Activated CD4-positive, alpha-beta T cell treated with anti-CD3 and anti-CD28 coated beads, Interleukin-2, amount 10 ng/mL, durations not matched to agents 24 days and 14 days (primary cell): ENCODE measurements at regions of chr1 and their contacts with region 1.

Region 1: DNA sequence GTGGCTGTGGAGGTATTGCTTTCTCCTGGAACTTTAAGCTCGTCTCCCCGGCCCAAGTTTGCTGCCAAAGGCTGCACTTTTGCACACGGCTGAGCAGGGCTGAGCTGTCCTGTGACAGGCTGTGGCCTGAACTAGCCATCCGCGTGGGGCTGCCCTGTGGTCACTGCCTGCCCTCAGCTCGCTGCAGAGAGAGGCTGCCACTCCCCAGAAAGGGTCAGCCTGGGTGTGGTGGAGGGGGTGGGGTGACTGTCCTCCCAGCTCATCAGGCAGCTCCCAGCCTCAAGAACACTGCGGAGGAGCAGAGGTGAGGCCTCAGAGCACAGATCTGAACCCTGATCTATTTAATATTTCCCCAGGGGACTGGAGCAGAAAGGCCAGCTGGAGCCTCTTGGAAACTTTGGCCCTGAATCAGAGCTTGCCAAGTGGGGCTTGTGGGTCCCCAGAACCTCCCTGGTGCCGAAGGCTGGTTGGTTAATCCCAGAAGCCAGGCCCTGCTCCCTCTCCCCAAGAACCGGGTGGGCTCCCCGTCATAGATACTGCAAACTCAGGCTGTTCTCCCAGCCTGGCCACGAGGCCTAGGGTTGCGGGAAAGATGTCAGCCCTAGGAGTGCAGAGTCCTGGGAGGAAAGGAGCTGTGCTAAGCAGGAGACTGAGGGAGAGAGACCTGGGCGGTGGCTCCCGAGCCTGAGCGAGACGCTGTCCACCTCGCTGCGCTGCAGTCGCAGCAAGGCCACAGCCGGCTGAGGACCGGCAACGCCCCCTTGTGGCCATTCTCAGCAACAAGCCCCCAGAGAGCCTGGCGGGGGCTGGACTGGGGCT is 125.1 kb upstream of the IPO9 start:
- DNase-seq: peak; percentile 89
- H3K4me3 Mint-ChIP-seq: no peak overlapping the region
- H3K27ac Mint-ChIP-seq: no peak overlapping the region
- H3K4me1 Mint-ChIP-seq: no peaks in the 10 kb centered on the region
- H3K27me3 Mint-ChIP-seq: peaks cover 5% of the 10 kb centered on the region

Region 2: GRCh38 chr1:201530741-201531531 is 172.9 kb before region 1 on chr1:
- intact Hi-C with region 1: loop called (anchors 1 kb)
- DNase-seq: peak; percentile 76
- H3K4me3 Mint-ChIP-seq: no peak overlapping the region
- H3K27ac Mint-ChIP-seq: no peak overlapping the region
- H3K4me1 Mint-ChIP-seq: peaks cover 11% of the 10 kb centered on the region
- H3K27me3 Mint-ChIP-seq: no peaks in the 10 kb centered on the region

Region 3: GRCh38 chr1:201559679-201560162 is 144.1 kb before region 1 on chr1:
- intact Hi-C with region 1: loop called (anchors 1 kb)
- DNase-seq: peak; percentile 88
- H3K4me3 Mint-ChIP-seq: no peak overlapping the region
- H3K27ac Mint-ChIP-seq: no peak overlapping the region
- H3K4me1 Mint-ChIP-seq: peaks cover 1% of the 10 kb centered on the region
- H3K27me3 Mint-ChIP-seq: peaks cover 2% of the 10 kb centered on the region

Region 4: DNA sequence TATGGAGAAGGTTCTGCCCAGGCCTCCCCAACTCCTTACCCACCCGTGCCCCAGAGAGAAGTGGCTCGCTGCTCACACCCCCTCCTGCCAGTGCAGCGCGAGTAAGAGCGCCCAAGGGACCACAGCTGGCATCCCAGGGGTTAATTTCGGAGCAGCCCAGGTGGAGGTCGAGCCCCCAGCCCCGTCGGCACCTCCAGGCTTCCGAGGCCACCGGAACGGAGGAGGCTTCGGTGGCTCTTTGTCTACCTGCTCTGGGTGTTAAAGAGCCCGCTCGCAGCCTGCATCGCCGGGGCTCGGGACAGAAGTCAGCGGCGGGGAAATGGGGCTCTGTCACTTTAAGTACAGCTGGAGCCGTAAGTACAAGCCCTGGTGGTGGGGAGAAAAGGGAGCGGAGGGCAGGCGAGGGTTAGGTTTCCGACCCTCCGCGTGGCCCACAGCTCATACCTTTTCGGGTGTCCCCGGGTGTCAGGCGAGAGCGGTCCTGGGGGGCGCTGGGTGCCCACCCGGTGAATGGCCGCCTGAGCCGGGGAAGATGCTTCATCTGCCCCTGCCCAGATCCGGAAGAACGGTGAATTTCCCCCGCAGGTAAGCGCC is 35.8 kb after region 1 on chr1:
- intact Hi-C with region 1: no loop called
- DNase-seq: peak; percentile 74
- H3K4me3 Mint-ChIP-seq: peak overlapping the region; percentile 67
- H3K27ac Mint-ChIP-seq: no peak overlapping the region
- H3K4me1 Mint-ChIP-seq: peaks cover 6% of the 10 kb centered on the region
- H3K27me3 Mint-ChIP-seq: peaks cover 61% of the 10 kb centered on the region